ENCODE measurements at regions of chr10 and their contacts with region 1.

Region 1: GRCh38 chr10:58919927-58920654 is 256.4 kb upstream of the PHYHIPL start:
- DNase-seq: peak; percentile 54
- ATAC-seq: peak; percentile 65
- H3K4me3 ChIP-seq: no peak overlapping the region
- H3K27ac ChIP-seq: no peak overlapping the region
- H3K4me1 ChIP-seq: 0 out of 2 replicates have a peak, but pooled peaks cover 1% of the 10 kb centered on the region
- H3K27me3 ChIP-seq: no peaks in the 10 kb centered on the region; the same call in 1 of the 2 replicates
- CTCF ChIP-seq: no peak
- POLR2A ChIP-seq: no peak
- RAD21 ChIP-seq: no peak

Region 2: GRCh38 chr10:58424176-58424575 is 495.9 kb before region 1 on chr10:
- CTCF ChIA-PET with region 1: no interaction called
- POLR2A ChIA-PET with region 1: no interaction called
- dilution Hi-C with region 1: no loop called
- in situ Hi-C with region 1: loop called (anchors 10 kb)
- intact Hi-C with region 1: no loop called
- DNase-seq: peak; percentile 13
- ATAC-seq: no peak
- H3K4me3 ChIP-seq: no peak overlapping the region
- H3K27ac ChIP-seq: no peak overlapping the region
- H3K4me1 ChIP-seq: no peaks in the 10 kb centered on the region
- H3K27me3 ChIP-seq: no peaks in the 10 kb centered on the region
- CTCF ChIP-seq: no peak
- POLR2A ChIP-seq: no peak
- RAD21 ChIP-seq: no peak

Measured in IMR-90 (cell line).